Panc1 (cell line): ENCODE measurements at regions of chr5 and their contacts with region 1.

Region 1: DNA sequence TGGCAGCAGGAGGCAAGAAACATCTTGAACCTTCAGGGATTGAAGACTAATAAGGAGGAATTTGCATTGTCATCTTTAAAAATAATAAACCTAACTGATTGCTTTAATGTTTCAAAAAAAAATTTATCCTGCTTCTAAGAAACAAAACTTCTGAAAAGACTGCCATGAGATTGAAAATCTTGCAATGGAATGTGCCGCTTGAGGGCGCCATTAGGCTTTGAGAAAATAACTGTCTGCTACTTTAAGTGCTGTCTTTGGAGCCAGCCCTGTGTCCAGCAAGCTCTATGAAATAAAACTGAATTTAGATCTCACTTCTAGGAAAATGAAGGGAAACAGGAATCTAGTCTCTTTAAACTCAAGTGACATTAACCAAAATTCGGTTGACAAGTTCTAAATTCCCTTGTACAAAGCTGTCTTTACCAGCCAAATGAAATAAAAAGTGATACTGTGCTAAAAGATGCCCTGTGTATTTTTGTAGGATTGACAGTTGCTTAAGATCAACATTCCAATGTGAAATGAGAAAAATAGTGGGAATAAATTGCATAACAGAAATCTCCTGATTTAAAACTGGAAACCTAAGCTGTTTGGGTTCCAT is 79.4 kb downstream of the ESM1 start:
- DNase-seq: peak; percentile 24
- ATAC-seq: no peak
- H3K4me3 ChIP-seq: no peak overlapping the region
- H3K27ac ChIP-seq: no peak overlapping the region
- H3K4me1 ChIP-seq: no peaks in the 10 kb centered on the region
- H3K27me3 ChIP-seq: peaks cover 9% of the 10 kb centered on the region; the same call in 1 of the 2 replicates
- CTCF ChIP-seq: peak; percentile 73

Region 2: DNA sequence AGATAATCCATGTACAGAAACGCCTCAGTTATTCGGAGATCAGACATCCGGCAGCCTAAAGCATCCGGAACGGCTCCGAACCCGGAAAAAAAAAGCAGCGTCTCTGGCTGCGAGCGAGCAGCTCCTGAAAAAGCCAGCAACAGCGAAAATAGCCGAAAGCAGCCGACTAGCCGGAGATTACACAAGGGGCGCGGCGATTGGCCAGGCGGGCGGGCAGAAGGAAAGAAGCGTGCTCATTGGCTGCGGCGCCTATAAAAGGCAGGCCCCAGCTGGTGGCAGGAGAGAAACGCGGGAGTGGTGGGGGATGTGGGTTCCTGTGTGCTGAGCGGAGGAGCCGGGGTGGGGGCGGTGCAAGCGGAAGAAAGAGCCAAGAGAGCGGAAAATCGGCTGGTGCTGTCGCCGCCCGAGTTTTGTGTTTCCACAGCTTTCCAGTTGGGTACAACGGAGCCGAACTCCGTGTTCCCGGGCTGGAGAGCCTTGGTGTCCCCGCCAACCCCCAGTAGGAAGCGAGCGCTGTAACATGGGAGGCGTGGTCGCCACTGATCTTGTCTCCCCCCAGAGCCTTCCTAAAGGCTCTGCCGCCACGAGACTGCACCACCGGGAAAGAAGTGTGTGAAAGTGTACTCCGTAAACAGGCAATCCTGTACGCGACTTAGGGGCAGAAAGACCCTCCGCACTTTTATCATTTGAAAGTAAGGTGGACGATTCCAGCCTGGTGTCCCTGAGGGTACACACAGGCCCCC is 595.4 kb before region 1 on chr5 and contains the start of gene ARL15:
- CTCF ChIA-PET with region 1: no interaction called
- POLR2A ChIA-PET with region 1: no interaction called
- in situ Hi-C with region 1: no loop called
- intact Hi-C with region 1: no loop called
- DNase-seq: peak; percentile 64
- ATAC-seq: peak; percentile 96
- H3K4me3 ChIP-seq: peak within 1 kb of the TSS; percentile 80 to 85
- H3K27ac ChIP-seq: peak within 1 kb of the TSS; percentile 84
- H3K4me1 ChIP-seq: peaks cover 13% of the 10 kb centered on the region
- H3K27me3 ChIP-seq: no peaks in the 10 kb centered on the region
- CTCF ChIP-seq: no peak
- total RNA-seq, gene ARL15: 16.5 TPM

Region 3: DNA sequence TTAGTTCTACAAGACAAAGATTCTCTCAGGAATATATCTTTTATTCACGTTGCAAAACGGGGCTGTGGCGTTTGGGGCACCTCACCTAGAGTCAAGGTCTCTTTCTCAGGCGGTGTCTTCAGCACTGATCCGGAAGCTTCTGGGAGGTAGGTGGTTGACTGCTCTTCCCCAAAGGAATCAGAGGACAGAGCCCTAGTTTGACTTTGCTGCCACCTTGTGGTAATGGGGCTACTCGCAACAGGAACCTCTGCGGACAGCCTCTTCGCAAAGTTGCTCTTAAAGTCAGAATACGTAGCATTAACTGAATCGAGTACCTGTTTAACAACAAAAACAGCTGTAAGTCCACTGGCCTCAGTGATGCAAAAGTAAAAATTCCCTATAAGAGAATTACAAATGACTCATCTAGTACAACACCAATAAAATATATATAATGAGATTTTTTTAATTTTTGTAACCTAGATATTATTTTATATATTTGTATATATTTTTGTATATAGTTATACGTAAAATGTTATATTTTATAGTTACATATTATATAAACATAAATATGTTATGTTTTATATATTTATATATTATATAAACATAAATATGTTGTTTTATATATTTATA is 240.6 kb after region 1 on chr5:
- CTCF ChIA-PET with region 1: no interaction called
- POLR2A ChIA-PET with region 1: no interaction called
- in situ Hi-C with region 1: no loop called
- intact Hi-C with region 1: loop called (anchors 1 kb)
- DNase-seq: peak; percentile 89
- ATAC-seq: peak; percentile 99
- H3K4me3 ChIP-seq: no peak overlapping the region
- H3K27ac ChIP-seq: no peak overlapping the region
- H3K4me1 ChIP-seq: no peaks in the 10 kb centered on the region
- H3K27me3 ChIP-seq: peaks cover 9% of the 10 kb centered on the region
- CTCF ChIP-seq: peak; percentile 95

Region 4: GRCh38 chr5:55159763-55160492 is 253.9 kb after region 1 on chr5 and contains the start of gene GPX8:
- CTCF ChIA-PET with region 1: interaction called, 13 read pairs
- POLR2A ChIA-PET with region 1: no interaction called
- in situ Hi-C with region 1: no loop called
- intact Hi-C with region 1: no loop called
- DNase-seq: peak; percentile 73
- ATAC-seq: peak; percentile 96
- H3K4me3 ChIP-seq: peak within 1 kb of the TSS; percentile 70 to 82
- H3K27ac ChIP-seq: peak within 1 kb of the TSS; percentile 98
- H3K4me1 ChIP-seq: peaks cover 5% of the 10 kb centered on the region; the same call in 1 of the 2 replicates
- H3K27me3 ChIP-seq: no peaks in the 10 kb centered on the region; the same call in 1 of the 2 replicates
- CTCF ChIP-seq: peak; percentile 75
- total RNA-seq, gene GPX8: 24.8 TPM

Region 5: DNA sequence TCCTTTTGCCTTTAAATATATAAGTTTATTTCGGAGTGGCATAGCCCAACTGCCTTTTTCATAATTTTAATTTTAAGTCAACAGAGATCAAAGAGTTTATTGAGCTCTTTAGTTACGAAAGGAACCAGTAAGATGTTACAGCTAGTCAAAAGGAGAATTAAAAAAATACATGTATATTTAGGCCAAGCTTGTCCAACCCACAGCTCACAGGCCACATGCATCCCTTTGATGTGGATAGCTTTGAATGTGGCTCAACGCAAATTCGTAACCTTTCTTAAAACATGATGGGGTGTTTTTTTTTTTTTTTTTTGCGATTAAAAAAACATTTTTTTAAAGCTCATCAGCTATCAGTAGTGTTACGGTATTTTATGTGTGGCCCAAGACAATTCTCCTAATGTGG is 894.9 kb after region 1 on chr5:
- CTCF ChIA-PET with region 1: interaction called, 10 read pairs
- POLR2A ChIA-PET with region 1: no interaction called
- in situ Hi-C with region 1: no loop called
- intact Hi-C with region 1: no loop called
- DNase-seq: no peak
- ATAC-seq: no peak
- H3K4me3 ChIP-seq: no peak overlapping the region
- H3K27ac ChIP-seq: no peak overlapping the region
- H3K4me1 ChIP-seq: no peaks in the 10 kb centered on the region
- H3K27me3 ChIP-seq: no peaks in the 10 kb centered on the region
- CTCF ChIP-seq: no peak